ENCODE measurements at regions of chr17 and their contacts with region 1.

Region 1: GRCh38 chr17:45385331-45385997 is 47.2 kb downstream of the ARHGAP27 start:
- DNase-seq: peak; percentile 88 to 92 (median 91)
- ATAC-seq: peak; percentile 97
- H3K4me3 ChIP-seq: no peak overlapping the region
- H3K4me1 ChIP-seq: no peaks in the 10 kb centered on the region
- CTCF ChIP-seq: peak; percentile 90

Region 2: GRCh38 chr17:45218895-45219661 is 166.4 kb before region 1 on chr17:
- intact Hi-C with region 1: loop called (anchors 2 to 5 kb)
- DNase-seq: peak; percentile 83 to 96 (median 88)
- ATAC-seq: peak; percentile 82
- H3K4me3 ChIP-seq: no peak overlapping the region
- H3K4me1 ChIP-seq: no peaks in the 10 kb centered on the region
- CTCF ChIP-seq: peak; percentile 78

Region 3: GRCh38 chr17:45277216-45277849 is 108.1 kb before region 1 on chr17:
- intact Hi-C with region 1: loop called (anchors 2 to 5 kb)
- DNase-seq: peak; percentile 92 to 99 (median 92)
- ATAC-seq: peak; percentile 92
- H3K4me3 ChIP-seq: no peak overlapping the region
- H3K4me1 ChIP-seq: no peaks in the 10 kb centered on the region
- CTCF ChIP-seq: peak; percentile 60

Region 4: DNA sequence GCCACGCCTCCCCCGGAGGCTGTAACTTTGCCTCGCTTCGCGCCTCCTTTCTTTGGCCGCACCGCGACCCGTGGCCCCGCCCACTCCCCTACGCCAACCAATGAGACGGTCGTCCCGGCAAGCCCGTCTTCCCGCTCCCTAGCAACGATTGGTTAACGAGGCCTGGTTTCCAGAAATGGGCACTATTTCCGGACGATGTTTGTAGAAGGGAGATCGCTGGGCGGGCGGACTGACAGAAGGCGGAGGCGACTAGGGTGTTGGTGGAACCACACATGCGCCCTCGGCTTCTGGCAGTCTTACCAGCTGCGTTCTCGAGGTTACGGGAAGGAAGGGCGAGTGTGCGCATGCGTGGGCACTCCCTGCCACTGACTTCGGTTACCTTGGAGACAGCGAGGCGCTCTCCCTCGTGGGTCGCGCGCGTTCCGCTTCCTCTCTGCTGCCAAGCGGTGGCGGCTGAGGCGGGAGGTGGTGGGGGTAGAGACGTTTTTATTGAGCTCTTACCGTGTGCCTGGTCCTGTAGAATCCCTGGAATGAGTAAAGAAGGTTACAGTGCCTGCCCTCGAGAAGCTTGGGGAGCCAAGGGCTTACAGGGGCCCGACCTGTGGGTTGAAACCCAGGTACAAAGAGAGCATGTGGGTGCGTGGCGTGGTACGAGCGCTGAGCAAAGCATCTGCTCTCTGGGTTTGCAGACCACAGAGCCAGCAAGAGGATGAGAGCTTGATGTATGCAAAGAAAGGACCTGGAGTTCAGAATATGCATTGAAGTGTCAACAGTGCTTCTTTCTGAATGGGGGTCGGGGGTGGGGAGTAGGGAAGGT is 68.1 kb before region 1 on chr17:
- intact Hi-C with region 1: loop called in 1 of 2 experiments (anchors 10 kb)
- DNase-seq: peak; percentile 99 to 100 (median 100)
- ATAC-seq: peak; percentile 83
- H3K4me3 ChIP-seq: peak overlapping the region; percentile 76
- H3K4me1 ChIP-seq: peaks cover 75% of the 10 kb centered on the region
- CTCF ChIP-seq: no peak

Region 5: GRCh38 chr17:45451141-45451540 is 65.7 kb after region 1 on chr17:
- intact Hi-C with region 1: no loop called
- DNase-seq: no peak
- ATAC-seq: no peak
- H3K4me3 ChIP-seq: no peak overlapping the region
- H3K4me1 ChIP-seq: peaks cover 12% of the 10 kb centered on the region
- CTCF ChIP-seq: no peak